ENCODE measurements at regions of chr2 and their contacts with region 1.

Region 1: DNA sequence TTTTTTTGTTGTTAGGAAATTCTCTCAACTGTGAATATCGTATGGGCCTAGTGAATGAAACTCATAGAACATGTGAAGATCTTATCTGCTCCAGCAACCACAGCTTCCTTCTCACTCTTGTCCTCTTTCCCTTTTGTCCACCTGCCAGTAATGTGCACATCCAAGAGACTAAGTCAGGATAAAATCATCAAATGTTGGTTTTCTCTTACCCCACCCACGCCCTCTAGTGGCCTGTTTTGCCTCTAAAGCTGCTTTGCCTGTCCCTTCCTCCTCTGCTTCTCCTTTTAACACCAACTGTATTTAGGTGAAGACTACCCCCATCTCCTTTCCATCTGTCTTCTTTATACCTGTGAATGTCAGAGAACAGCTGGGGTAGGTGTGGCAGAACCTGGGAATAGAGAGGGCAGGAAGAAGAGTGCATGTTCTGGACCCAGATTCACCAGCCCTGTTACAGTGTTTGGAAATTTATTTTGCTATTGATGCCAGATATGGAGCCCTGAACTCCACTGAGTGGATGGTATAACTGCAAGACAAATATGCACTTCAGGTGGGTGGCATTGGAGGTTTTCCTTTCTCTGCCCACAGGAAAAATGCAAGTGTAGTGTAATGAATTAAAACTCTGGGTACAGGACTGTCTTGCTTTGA is 8.4 kb upstream of the MGAT5 start:
- DNase-seq: peak; percentile 86
- H3K4me3 Mint-ChIP-seq: no peak overlapping the region
- H3K27ac Mint-ChIP-seq: peak overlapping the region; percentile 79
- H3K4me1 Mint-ChIP-seq: peaks cover 43% of the 10 kb centered on the region
- H3K27me3 Mint-ChIP-seq: no peaks in the 10 kb centered on the region
- CTCF ChIP-seq: peak; percentile 75

Region 2: DNA sequence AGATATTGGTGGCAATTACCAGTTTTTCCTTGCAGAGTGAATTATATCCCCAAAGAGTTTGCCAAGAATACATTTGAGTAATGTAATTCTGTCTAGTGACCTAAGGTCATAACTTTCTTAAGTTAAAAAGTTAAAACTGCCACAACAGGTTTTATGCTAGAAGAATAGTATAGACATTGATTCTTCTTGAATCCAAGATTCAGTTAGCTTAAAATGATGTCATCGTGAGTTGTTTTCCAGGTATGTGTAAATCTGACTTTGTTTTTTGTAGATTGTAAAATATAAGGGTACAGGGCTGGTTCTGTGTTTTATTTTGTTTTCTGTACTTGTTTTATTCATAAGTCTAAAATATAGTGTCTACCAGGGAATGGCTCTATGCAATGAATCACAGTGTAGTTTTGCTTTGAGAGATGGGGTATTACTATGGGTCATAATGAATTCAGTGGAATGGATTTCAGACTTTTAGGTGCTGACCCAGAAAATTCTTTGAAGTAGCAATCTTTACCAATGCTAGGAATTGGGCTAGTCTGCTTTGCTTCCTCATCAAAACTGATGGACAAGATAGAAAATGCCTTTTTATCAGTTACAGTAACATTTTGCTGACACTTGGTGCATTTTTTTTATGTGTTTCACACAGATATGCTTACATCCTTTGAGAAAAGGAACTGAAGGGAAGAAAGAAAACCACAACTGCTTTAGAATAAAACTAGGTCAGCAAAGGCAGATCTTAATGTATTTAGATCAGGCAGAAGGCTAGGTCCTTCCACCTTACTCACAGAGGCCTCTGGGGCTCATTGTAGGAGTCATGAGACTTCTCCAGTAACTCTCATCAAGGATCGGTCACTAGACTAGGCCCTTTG is 12.4 kb before region 1 on chr2:
- CTCF ChIA-PET with region 1: interaction called, 10 read pairs
- intact Hi-C with region 1: no loop called
- DNase-seq: no peak
- H3K4me3 Mint-ChIP-seq: peak overlapping the region; percentile 42
- H3K27ac Mint-ChIP-seq: peak overlapping the region; percentile 97
- H3K4me1 Mint-ChIP-seq: peaks cover 71% of the 10 kb centered on the region
- H3K27me3 Mint-ChIP-seq: no peaks in the 10 kb centered on the region
- CTCF ChIP-seq: no peak